ENCODE measurements at regions of chr6 and their contacts with region 1.

Region 1: GRCh38 chr6:106273087-106273486 is 52.5 kb downstream of the ATG5 start:
- DNase-seq: no peak
- H3K4me3 ChIP-seq: no peak overlapping the region
- H3K27ac ChIP-seq: no peak overlapping the region
- H3K4me1 ChIP-seq: no peaks in the 10 kb centered on the region
- H3K27me3 ChIP-seq: no peaks in the 10 kb centered on the region
- CTCF ChIP-seq: no peak
- POLR2A ChIP-seq: no peak

Region 2: GRCh38 chr6:106039836-106040592 is 233.1 kb before region 1 on chr6:
- intact Hi-C with region 1: loop called (anchors 5 kb)
- DNase-seq: no peak
- H3K4me3 ChIP-seq: no peak overlapping the region
- H3K27ac ChIP-seq: no peak overlapping the region
- H3K4me1 ChIP-seq: no peaks in the 10 kb centered on the region
- H3K27me3 ChIP-seq: no peaks in the 10 kb centered on the region
- CTCF ChIP-seq: no peak
- POLR2A ChIP-seq: no peak

Region 3: DNA sequence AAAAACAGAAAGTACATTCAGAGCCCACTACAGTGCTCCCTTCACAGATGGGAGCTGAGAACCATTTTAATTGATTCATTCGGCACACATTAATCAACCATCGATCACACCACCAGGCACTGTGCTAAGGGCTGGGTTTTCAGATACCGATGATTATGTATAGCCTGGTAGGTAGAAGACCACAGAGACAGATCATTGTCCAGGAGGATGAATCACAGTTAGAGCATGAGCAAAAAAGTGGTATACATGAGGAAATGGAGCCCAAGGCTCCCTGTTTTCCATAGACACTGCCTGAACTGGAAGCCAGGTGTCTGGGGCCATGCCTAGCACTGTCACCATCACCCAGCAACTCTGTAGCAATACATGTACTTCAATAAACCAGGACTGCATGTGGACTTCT is 195.9 kb before region 1 on chr6:
- intact Hi-C with region 1: no loop called
- DNase-seq: no peak
- H3K4me3 ChIP-seq: no peak overlapping the region
- H3K27ac ChIP-seq: no peak overlapping the region
- H3K4me1 ChIP-seq: no peaks in the 10 kb centered on the region
- H3K27me3 ChIP-seq: no peaks in the 10 kb centered on the region
- CTCF ChIP-seq: no peak
- POLR2A ChIP-seq: no peak